ENCODE measurements at regions of chr4 and their contacts with region 1.

Region 1: DNA sequence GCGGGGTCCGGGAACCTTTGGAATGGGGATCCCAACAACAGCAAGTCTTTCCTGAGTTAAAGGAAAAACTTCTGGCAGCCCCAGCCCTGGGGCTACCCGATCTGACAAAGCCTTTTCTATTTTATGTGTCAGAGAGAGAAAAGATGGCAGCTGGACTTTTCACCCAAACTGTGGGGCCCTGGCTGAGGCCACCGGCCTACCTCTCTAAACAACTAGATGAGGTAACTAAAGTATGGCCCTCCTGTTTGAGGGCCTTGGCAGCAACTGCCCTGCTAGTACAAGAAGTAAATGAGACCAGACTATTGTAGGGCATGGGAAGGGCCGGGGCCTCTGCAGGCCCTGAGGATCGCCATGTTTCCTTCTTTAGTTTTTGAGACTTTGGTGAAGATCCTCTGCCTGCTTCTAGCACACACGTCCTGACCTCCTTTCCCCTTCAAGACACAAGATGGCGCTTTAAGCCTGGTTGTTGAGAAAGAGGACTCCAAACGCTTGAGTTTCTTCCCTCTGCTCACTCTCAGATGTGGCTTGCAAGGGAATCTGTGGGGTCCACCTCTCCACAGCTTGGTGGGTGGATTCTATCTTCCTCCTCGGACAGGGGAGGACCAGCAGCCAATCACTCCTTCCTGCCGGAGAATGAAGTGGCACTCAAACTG is 18.5 kb upstream of the DRD5 start:
- DNase-seq: peak; percentile 63
- H3K4me3 Mint-ChIP-seq: no peak overlapping the region
- H3K27ac Mint-ChIP-seq: no peak overlapping the region
- H3K4me1 Mint-ChIP-seq: no peaks in the 10 kb centered on the region
- H3K27me3 Mint-ChIP-seq: peaks cover 16% of the 10 kb centered on the region

Region 2: GRCh38 chr4:9781343-9782135 is 18.6 kb after region 1 on chr4 and contains the start of gene DRD5:
- CTCF ChIA-PET with region 1: no interaction called
- DNase-seq: no peak
- H3K4me3 Mint-ChIP-seq: no peak within 1 kb of the TSS
- H3K27ac Mint-ChIP-seq: no peak within 1 kb of the TSS
- H3K4me1 Mint-ChIP-seq: no peaks in the 10 kb centered on the region
- H3K27me3 Mint-ChIP-seq: peaks cover 52% of the 10 kb centered on the region

Region 3: GRCh38 chr4:9913846-9914245 is 150.9 kb after region 1 on chr4:
- CTCF ChIA-PET with region 1: no interaction called
- DNase-seq: no peak
- H3K4me3 Mint-ChIP-seq: no peak overlapping the region
- H3K27ac Mint-ChIP-seq: no peak overlapping the region
- H3K4me1 Mint-ChIP-seq: no peaks in the 10 kb centered on the region
- H3K27me3 Mint-ChIP-seq: no peaks in the 10 kb centered on the region

Region 4: GRCh38 chr4:10013722-10014121 is 250.8 kb after region 1 on chr4:
- CTCF ChIA-PET with region 1: interaction called, 137 read pairs
- DNase-seq: peak; percentile 71
- H3K4me3 Mint-ChIP-seq: no peak overlapping the region
- H3K27ac Mint-ChIP-seq: peak overlapping the region; percentile 28
- H3K4me1 Mint-ChIP-seq: peaks cover 15% of the 10 kb centered on the region
- H3K27me3 Mint-ChIP-seq: no peaks in the 10 kb centered on the region

Region 5: DNA sequence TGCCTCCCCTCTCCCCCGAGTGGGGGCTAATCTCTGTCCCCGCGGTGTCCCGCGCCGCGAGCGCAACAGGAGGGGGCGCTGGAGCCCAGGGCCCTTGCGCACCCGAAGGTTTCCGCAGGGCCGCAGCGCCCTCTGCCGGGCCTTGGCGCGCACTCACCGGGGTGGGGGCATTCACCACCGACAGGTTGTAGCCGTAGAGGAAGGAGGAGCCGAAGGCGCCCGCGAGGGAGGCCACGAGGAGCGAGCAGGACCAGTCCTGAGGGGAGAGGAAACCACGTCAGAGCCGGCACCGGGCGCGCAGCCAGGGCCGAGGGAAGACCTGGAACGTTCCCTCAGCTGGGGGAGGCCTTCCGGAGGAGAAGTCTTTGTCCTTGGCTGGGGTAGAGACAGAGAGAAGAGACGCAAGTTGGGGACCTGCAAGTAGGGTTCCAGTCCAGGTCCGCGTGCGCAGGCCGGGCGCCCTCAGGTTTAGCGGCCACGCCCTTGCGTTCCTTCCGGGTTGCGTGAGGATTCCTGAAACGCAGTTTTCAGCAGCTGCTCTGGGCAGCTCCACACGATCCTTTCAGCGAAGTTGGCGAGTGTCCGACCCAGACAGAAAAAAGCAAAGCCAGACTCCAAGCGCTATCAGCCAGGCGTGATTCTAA is 256.0 kb after region 1 on chr4:
- CTCF ChIA-PET with region 1: interaction called, 137 read pairs
- DNase-seq: peak; percentile 96
- H3K4me3 Mint-ChIP-seq: peak overlapping the region; percentile 81
- H3K27ac Mint-ChIP-seq: peak overlapping the region; percentile 96
- H3K4me1 Mint-ChIP-seq: peaks cover 23% of the 10 kb centered on the region
- H3K27me3 Mint-ChIP-seq: peaks cover 14% of the 10 kb centered on the region

Measured in activated naive CD4-positive, alpha-beta T cell treated with anti-CD3 and anti-CD28 coated beads, Interleukin-2, amount 10 ng/mL, durations not matched to agents 7 days and 5 days (primary cell).